ENCODE measurements at regions of chr1 and their contacts with region 1.

Region 1: DNA sequence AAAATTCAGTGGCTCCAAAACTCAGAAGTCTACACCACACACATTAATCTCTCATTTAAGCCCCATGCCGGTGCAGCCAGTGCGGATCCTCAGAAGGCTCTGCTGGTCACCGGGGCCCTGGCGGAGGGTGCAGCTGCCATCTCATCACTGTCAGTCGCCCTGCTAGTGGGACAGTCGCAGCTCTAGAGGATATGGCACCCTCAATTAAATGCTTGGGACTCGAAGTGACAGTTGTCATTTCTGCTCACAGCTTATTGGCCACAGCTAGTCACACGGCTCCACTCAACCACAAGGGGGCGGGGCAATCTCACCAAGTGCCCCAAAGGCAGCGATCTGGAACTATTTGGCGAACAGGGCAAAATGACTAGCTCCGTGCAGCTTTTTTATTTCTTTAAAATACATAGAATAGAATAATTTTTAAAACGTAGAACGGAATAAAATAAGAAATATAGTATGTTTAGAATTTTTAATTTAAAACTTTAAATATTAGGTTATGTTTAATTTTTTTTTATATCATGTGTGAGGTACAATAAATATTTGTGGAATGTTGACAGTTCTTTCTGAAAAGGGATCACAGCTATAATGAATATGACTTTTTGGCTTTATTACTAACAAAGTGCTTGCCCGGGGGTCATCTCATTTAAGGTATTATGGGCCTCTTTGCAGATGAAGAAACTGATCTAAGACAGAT is 8.0 kb upstream of the MAN1C1 start:
- DNase-seq: peak; percentile 78 to 91
- ATAC-seq: peak; percentile 95

Region 2: GRCh38 chr1:25743826-25744581 is 135.4 kb after region 1 on chr1:
- intact Hi-C with region 1: loop called in 1 of 2 experiments (anchors 5 kb)
- DNase-seq: peak; percentile 60 to 70
- ATAC-seq: peak; percentile 88

Region 3: DNA sequence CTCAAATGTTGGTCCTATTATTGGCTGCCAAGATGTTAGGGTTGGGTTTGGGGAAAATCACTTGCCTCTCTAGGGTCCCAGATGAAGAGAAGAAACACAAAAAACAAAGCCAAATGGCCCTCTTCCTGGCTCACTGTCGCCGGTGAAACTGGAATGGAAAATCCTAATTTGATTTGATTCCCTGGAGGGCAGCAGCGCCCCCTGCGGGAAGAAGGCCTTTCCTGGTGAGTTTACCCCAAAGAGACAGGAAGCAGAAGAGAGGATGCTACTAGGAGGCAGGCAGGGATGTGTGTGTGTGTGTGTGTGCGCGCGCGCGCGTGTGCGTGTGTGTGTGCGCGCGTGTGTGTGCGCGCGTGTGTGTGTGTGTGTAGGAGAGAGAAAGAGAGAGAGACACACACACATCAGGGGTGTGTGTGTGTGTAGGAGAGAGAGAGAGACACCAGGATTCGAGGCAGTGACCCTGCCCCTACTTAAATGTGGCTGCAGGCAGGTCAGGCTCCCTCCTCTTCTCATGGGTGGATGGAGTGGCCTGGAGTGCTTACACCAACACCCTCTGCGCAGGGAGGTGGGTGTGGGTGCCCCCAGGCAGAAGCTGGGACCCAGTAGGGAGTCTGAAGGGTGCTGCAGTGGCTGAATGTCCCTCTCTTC is 188.3 kb after region 1 on chr1:
- intact Hi-C with region 1: loop called (anchors 5 kb)
- DNase-seq: peak; percentile 74 to 95
- ATAC-seq: peak; percentile 60

Region 4: GRCh38 chr1:26127235-26128163 is 518.9 kb after region 1 on chr1:
- intact Hi-C with region 1: no loop called
- DNase-seq: peak in 1 of 2 donors; percentile 36
- ATAC-seq: peak; percentile 52